ENCODE measurements at regions of chr5 and their contacts with region 1.

Region 1: DNA sequence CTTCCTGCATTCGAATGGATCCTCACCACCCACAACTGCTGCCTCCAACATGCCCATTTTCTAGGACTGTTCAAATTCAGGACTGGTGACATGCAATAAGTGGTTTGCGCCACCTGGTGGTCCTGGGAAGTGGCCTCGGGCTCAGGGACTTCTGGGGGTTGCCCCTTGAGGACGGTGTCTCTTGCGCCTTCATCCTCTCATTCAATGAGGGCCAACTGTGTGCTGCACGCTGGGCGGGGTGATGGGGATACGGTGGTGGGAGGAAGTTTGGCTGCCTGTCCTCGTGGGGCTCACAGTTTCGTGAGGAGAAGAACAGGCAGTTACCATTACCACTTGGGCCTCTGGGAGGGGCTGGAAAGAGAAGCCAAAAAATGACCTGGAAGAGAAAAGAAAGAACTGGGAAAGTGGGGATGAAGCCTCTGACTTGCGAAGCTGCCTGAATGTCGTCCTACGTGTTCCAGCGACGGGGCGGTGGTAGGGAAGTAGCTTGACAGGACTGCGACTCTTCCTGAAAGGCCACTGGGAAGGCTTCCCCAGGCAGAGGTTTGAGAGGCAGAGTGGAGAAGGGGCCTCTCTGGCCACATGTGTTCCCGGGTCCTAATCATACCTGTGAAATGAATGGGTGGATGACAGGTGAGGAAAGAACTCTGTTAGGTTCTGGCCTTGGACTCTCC is 49.0 kb downstream of the PSD2 start:
- DNase-seq: peak; percentile 84
- ATAC-seq: peak; percentile 34

Region 2: DNA sequence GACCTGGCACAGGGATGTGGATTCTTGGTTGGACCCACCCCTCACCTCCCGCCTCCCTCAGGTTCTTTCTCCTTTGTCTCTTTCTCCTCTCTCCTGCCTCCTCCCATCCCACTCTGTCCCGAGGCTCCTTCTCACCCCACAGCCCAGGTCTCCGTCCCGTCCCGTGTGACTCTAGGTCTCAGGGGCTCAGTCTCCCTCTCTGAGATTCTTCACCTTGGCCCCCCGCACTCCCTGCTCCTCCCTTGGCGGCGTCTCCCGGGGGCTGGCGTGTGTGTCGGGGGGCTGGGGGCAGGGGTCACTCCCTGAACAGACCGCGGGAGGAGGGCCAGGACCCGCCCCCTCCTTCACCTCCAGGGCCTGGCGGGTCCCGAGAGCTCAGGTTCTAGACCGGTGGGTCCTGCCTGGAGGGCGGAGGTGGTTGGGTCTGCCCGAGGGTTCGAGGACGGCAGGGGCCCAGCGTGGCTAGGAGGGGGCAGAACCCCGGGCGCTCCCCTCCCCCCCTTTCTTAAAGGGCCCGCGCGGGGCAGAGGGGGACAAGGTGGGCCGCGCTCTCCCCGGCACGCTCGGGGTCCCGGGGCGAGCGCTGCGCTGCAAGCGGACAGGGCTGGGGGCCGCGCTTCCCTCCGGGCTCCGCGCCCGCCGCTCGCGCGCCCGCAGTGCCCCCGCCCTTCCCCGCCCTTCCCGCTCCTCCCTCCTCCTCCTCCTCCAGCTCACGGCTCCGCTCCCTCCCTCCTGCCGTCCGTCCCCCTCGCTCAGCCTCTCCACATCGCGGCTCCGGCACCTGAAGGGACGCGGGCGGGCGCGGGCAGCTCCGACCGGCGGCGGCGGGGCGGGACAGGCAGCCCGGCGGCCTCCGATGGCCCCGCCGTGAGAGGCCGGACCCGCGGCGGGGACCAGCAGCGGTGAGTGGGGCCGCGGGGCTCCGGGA is 49.3 kb before region 1 on chr5 and contains the start of gene PSD2:
- intact Hi-C with region 1: loop called (anchors 10 kb)
- DNase-seq: no peak
- ATAC-seq: peak; percentile 16
- total RNA-seq, gene PSD2: 0.53 TPM

Region 3: DNA sequence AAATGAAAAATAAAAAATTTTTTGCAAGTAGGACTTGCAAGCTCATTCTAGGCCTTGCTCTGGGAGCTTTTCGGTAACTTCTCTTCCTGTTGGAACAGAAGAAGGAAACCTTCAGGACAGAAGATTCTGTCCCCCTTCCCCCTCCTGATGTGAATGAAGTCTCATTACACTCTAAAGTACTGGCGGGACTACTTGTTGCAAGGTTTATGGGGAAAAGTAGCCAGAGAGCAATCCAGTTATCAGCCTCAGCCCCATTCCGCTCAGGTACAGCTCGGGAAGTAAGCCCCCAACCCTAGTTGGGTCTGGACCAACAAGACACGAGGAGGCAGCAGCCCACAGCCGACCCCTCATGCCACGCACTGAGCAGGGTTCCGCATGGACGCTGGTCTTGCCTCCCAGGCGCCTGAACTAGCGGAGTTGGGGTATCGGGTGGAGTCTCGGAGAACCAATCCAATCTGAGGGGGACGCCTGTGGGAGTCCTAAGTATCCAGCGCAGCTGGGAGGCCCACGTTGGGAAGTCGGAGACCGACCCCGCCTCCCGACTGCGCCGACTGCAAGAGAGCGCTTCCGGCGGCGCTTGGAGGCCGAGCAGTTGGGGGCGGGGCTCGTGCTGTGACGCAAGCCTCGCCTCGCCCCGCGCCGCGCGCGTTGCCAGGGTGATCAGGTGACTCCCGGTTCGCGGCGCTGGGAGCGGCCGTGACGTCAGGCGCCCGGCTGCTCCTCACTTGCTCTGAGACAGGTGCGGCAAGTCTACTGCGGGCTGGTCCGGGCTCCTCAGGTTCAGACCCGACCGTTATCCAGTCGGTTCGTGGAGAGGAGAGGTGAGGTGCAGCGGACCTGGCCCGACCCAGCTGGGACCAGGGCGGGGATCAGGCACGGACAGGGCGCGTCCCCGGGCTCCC is 330.1 kb after region 1 on chr5 and contains the start of gene CYSTM1:
- intact Hi-C with region 1: no loop called
- DNase-seq: peak; percentile 98
- ATAC-seq: peak; percentile 96
- total RNA-seq, gene CYSTM1: 49.5 TPM

Measured in sciatic nerve (tissue), 2 donors.